ENCODE measurements at regions of chr1 and their contacts with region 1.

Region 1: GRCh38 chr1:84387480-84388163 is 10.7 kb upstream of the DNASE2B start:
- H3K4me3 Mint-ChIP-seq: no peak overlapping the region
- H3K27ac Mint-ChIP-seq: peak overlapping the region; percentile 18
- H3K4me1 Mint-ChIP-seq: peaks cover 35% of the 10 kb centered on the region
- H3K27me3 Mint-ChIP-seq: no peaks in the 10 kb centered on the region

Region 2: DNA sequence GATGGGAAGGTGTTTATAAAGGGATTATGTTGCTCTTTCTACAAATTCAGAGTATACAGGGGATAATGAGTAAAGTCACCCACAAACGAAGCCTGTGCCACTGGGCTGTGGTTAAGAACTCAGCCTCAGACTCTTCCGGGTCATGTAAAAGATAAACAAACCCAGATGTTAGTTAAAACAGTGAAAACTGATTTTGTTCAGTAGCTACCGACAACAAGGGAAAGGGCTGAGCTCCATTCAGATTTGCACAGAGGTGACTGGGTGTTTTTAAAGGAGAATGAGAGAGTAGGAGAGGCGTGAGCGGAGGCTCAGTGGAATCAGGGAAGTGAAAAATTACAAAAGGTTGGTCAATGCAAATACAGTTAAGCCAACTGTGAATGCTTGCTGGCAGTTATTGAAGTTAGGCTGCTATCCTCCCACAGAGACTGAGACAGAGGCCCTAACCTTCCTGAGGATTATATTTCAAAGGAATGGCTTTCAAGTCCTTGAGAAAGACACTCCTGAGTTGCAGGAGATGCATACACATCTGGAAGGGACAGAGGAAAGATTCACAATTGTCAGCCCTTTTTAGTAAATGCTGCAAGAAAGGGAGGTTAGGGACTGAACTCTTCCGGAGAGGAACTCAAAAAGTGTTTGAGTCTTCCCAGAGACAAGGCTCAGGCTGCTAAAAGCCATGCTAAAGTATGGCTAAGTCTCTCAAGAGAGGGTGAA is 116.0 kb before region 1 on chr1:
- intact Hi-C with region 1: loop called (anchors 10 kb)
- H3K4me3 Mint-ChIP-seq: no peak overlapping the region
- H3K27ac Mint-ChIP-seq: peak overlapping the region; percentile 52
- H3K4me1 Mint-ChIP-seq: peaks cover 13% of the 10 kb centered on the region
- H3K27me3 Mint-ChIP-seq: no peaks in the 10 kb centered on the region

Region 3: DNA sequence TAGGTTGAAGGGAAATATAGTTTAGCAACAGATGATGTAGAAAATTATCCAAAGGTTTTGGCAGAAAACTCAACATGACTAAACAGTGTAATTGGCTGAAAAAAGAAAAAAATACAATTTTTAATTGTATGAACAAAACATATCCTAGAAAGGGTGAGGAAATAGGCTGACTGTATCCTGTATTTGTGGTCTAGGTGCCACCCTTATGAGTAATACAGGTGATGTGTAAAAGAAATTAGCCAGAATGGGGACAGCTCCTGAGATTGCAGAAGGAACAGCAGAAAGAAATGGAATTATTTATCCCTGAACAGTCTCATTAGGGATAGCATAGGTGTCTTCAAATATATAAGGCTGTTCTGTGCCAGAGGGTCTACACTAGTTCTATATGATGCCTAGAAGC is 35.3 kb after region 1 on chr1:
- intact Hi-C with region 1: loop called (anchors 5 kb)
- H3K4me3 Mint-ChIP-seq: no peak overlapping the region
- H3K27ac Mint-ChIP-seq: no peak overlapping the region
- H3K4me1 Mint-ChIP-seq: peaks cover 16% of the 10 kb centered on the region
- H3K27me3 Mint-ChIP-seq: no peaks in the 10 kb centered on the region